Naive thymus-derived CD8-positive, alpha-beta T cell (primary cell): ENCODE measurements at regions of chr1 and their contacts with region 1.

Region 1: GRCh38 chr1:26889551-26890466 is at the start of gene GPN2:
- DNase-seq: peak; percentile 63 to 88 (median 74)
- ATAC-seq: peak; percentile 94 to 95
- H3K4me3 Mint-ChIP-seq: peak within 1 kb of the TSS; percentile 89 to 97 (median 94)
- H3K27ac Mint-ChIP-seq: peak within 1 kb of the TSS; percentile 90 to 98 (median 96)
- H3K4me1 Mint-ChIP-seq: peaks cover 19 to 49% (median 40%) of the 10 kb centered on the region in 4 donors
- H3K27me3 Mint-ChIP-seq: no peaks in the 10 kb centered on the region
- polyA plus RNA-seq, gene GPN2: 9.7 to 14.8 (median 12.5) TPM

Region 2: DNA sequence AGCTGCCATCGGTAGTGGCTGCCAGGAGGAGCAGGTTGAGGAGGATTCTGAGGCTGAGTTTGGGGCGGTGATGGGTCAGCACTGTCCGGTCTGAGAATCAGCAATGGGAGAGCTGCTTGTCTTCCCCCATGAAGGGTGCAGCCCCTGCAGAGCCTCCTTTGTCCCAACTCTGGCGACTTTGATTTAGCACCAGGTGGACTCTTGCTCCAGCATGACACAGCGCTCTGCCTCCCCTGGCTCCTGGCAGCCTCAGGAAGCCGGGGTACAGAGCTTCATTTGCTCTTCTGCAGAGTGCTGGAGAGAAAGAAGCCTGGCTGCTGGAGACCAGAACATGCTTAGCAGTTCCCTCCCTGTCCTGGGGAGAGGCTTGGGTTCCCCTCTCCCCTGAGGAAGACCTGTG is 50.0 kb before region 1 on chr1:
- POLR2A ChIA-PET with region 1: no interaction called
- DNase-seq: no peak
- ATAC-seq: no peak
- H3K4me3 Mint-ChIP-seq: no peak overlapping the region
- H3K27ac Mint-ChIP-seq: peak overlapping the region in 2 of 10 donors; percentile 6 to 78
- H3K4me1 Mint-ChIP-seq: peaks cover 1 to 25% (median 11%) of the 10 kb centered on the region in 4 donors
- H3K27me3 Mint-ChIP-seq: no peaks in the 10 kb centered on the region

Region 3: GRCh38 chr1:26879793-26880192 is 10.0 kb before region 1 on chr1:
- POLR2A ChIA-PET with region 1: interaction called, 13 read pairs
- DNase-seq: no peak
- ATAC-seq: no peak
- H3K4me3 Mint-ChIP-seq: no peak overlapping the region
- H3K27ac Mint-ChIP-seq: no peak overlapping the region
- H3K4me1 Mint-ChIP-seq: peaks cover 0 to 12% (median 11%) of the 10 kb centered on the region in 4 donors
- H3K27me3 Mint-ChIP-seq: no peaks in the 10 kb centered on the region

Region 4: DNA sequence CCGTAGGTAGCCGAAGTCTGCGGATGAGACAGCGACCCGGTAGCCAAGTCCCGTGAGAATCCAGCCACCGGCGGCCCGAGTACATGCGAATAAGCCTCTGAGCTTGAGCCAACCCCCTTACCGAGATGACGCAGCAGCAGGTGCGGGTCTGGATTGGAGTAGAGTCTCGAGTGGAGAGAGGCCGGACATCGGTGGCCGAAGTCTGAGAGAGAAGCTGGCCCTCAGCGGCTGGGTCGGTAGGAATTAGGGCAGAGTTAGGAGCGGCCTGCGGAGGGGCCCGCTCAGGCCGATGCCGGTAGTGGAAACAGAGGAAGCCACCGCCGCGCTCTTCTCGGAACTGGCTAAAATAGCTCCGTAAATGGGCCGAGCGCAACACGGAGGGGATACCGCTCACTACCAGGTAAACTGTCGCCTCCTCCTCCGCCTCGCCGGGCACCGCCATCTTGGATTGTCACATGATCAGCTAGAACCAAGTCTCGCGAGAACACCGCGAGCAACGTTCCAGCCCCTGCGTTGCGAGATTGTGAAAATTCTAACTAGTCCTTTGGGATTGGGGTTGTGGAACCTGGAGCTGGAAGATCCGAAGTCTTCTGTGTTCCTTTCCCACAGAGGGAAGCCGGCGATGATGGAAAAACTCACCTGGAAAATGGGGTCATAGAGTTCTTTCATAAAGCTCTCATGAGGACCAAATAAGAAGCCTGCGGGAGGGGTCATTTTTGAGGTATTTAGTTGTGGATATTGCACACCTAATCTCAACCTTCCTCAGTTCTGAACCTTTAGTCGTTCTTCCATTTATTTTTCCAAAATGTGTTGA is 10.4 kb after region 1 on chr1 and contains the start of gene GPATCH3:
- POLR2A ChIA-PET with region 1: interaction called, 78 read pairs
- DNase-seq: peak; percentile 81 to 96 (median 87)
- ATAC-seq: peak; percentile 95 to 97
- H3K4me3 Mint-ChIP-seq: peak within 1 kb of the TSS; percentile 89 to 99 (median 98)
- H3K27ac Mint-ChIP-seq: peak within 1 kb of the TSS; percentile 96 to 100 (median 99)
- H3K4me1 Mint-ChIP-seq: peaks cover 14 to 44% (median 30%) of the 10 kb centered on the region in 4 donors
- H3K27me3 Mint-ChIP-seq: no peaks in the 10 kb centered on the region
- polyA plus RNA-seq, gene GPATCH3: 10.9 to 15.2 (median 11.5) TPM

Region 5: GRCh38 chr1:26913754-26914619 is 24.2 kb after region 1 on chr1 and contains the start of gene NR0B2:
- POLR2A ChIA-PET with region 1: no interaction called
- DNase-seq: no peak
- ATAC-seq: no peak
- H3K4me3 Mint-ChIP-seq: no peak within 1 kb of the TSS
- H3K27ac Mint-ChIP-seq: peak within 1 kb of the TSS in 1 of 10 donors; percentile 62
- H3K4me1 Mint-ChIP-seq: peaks cover 0 to 4% (median 0%) of the 10 kb centered on the region in 4 donors
- H3K27me3 Mint-ChIP-seq: peaks cover 0 to 2% (median 0%) of the 10 kb centered on the region in 5 donors
- polyA plus RNA-seq, gene NR0B2: 0.18 TPM in 1 of 3 donors, not detected in the others

Region 6: DNA sequence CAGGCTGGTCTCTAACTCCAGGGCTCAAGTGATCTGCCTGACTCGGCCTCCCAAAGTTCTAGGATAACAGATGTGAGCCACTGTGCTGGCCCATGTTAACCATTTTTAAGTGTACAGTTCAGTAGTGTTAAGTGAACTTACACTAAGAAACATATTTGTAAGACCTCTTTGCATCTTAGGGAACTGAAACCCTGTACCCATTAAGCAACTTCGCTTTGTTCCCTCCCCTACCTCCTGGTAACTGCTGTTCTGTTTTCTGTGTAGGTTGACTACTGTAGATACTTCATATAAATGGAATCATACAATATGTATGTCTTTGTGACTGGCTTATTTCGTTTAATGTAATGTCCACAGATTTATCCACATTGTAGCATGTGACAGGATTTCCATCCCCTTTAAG is 42.7 kb after region 1 on chr1:
- POLR2A ChIA-PET with region 1: no interaction called
- DNase-seq: no peak
- ATAC-seq: no peak
- H3K4me3 Mint-ChIP-seq: no peak overlapping the region
- H3K27ac Mint-ChIP-seq: peak overlapping the region in 5 of 10 donors; percentile 9 to 67 (median 43)
- H3K4me1 Mint-ChIP-seq: peaks cover 4 to 8% (median 7%) of the 10 kb centered on the region in 4 donors
- H3K27me3 Mint-ChIP-seq: no peaks in the 10 kb centered on the region

Region 7: GRCh38 chr1:27087371-27088220 is 197.8 kb after region 1 on chr1:
- POLR2A ChIA-PET with region 1: no interaction called
- DNase-seq: peak in 1 of 10 donors; percentile 11
- ATAC-seq: no peak
- H3K4me3 Mint-ChIP-seq: no peak overlapping the region
- H3K27ac Mint-ChIP-seq: no peak overlapping the region
- H3K4me1 Mint-ChIP-seq: peaks cover 0 to 14% (median 8%) of the 10 kb centered on the region in 4 donors
- H3K27me3 Mint-ChIP-seq: peaks cover 0 to 24% (median 0%) of the 10 kb centered on the region in 5 donors